ENCODE measurements at regions of chr19 and their contacts with region 1.

Region 1: GRCh38 chr19:3163230-3163886 is 15.2 kb upstream of the S1PR4 start:
- DNase-seq: peak; percentile 58 to 73 (median 73)
- ATAC-seq: peak; percentile 95
- H3K4me3 ChIP-seq: no peak overlapping the region
- H3K4me1 ChIP-seq: peaks cover 3% of the 10 kb centered on the region
- CTCF ChIP-seq: peak; percentile 95

Region 2: DNA sequence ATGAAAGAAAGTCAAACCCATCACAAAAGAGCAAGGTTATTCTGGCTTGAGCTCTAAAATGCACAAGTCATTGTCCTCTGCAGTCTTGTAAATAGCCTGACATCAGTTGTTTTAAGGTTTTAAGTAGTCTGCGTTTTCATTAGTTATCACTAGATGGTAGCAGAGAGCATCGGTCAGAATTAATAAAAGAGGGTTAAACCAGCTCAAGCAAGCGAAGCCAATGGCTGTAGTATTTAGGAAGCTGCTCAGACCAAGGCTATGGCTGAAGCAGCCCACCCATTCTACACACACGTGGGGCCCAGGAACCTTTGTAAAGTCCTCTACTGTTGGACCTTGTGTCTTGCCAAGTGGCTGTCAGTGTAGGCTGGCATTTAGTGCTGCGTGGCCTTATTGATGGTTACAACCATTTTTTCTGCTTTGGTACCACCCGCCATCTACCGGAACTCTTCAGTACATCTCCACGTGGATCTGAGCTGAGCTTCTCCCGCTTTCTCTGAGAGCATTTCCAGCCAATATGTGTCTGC is 275.9 kb before region 1 on chr19:
- intact Hi-C with region 1: loop called in 1 of 2 experiments (anchors 10 kb)
- DNase-seq: peak in 1 of 3 donors; percentile 9
- ATAC-seq: peak; percentile 76
- H3K4me3 ChIP-seq: no peak overlapping the region
- H3K4me1 ChIP-seq: peaks cover 5% of the 10 kb centered on the region
- CTCF ChIP-seq: peak; percentile 35

Region 3: DNA sequence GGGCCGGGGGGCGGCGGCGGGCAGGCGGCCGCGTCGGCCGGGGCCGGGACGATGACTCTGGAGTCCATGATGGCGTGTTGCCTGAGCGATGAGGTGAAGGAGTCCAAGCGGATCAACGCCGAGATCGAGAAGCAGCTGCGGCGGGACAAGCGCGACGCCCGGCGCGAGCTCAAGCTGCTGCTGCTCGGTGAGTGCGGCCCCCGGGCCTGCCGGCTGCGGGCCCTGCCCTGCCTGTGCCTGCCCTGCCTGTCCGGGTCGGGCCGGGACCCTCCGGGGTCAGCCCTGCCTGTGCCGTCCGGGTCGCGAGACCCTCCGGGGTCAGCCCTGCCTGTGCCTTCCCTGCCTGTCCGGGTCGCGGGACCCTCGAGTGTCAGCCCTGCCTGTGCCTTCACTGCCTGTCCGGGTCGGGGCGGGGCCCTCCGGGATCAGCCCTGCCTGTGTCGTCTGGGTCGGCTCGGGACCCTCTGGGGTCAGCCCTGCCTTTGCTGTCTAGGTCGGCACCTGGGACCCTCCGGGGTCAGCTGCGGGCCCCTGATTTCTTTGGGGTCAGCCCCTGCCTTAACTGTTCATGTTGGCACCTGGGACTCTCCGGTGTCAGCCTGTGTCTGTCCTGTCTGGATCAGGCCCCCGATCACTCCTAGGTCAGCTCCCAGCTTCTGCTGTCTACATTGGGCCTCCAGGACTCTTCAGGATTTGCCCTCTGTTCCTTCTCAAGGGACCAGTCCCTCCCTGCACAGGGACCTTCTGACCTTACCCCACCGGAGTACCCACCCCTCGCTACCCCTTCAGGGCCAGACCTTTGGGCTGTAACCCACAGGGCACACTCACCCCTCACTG is 68.5 kb before region 1 on chr19:
- intact Hi-C with region 1: no loop called
- DNase-seq: peak in 1 of 3 donors; percentile 63
- ATAC-seq: no peak
- H3K4me3 ChIP-seq: peak overlapping the region; percentile 93
- H3K4me1 ChIP-seq: peaks cover 43% of the 10 kb centered on the region
- CTCF ChIP-seq: no peak

Region 4: DNA sequence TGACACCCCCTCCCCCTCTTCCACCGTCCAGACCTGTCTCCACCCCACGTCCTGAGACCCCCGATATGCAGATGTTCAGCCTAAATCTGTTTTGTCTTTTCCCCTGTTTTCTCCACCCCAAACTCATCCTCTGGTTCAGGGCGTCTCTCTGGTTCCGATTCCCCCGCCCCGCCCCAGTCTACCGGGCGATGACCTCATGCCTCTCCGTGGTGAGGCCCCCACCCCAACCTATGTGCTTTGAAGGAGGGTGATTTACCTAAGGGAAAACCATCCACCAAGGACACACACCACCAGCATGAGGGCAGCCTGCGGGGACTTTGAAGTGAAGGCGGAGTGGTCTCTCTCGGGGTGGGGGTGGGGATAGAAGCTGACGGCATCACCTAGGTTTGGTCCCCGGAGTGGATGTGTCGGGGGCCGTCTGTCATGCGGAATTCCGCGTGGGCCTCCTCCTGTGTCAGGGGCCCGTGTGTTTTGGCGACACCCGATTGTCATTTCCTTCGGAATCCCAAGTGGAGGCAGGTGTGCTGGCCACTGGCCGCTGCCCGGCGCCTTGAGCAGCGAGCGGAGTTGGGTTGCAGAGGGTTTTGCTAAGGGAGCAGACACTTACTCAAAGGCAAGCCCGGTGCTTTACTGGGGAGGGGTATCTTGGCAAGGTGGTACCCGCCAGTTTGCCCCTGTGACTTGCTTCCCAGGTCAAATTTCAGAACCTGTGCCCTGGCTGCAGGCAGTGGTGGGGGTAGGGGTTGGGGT is 344.2 kb after region 1 on chr19:
- intact Hi-C with region 1: no loop called
- DNase-seq: peak in 2 of 3 donors; percentile 41 to 58
- ATAC-seq: no peak
- H3K4me3 ChIP-seq: no peak overlapping the region
- H3K4me1 ChIP-seq: peaks cover 15% of the 10 kb centered on the region
- CTCF ChIP-seq: no peak

Region 5: GRCh38 chr19:3572132-3572854 is 408.9 kb after region 1 on chr19:
- intact Hi-C with region 1: no loop called
- DNase-seq: peak; percentile 99 to 100 (median 100)
- ATAC-seq: peak; percentile 86
- H3K4me3 ChIP-seq: peak overlapping the region; percentile 91
- H3K4me1 ChIP-seq: peaks cover 35% of the 10 kb centered on the region
- CTCF ChIP-seq: no peak

Measured in mucosa of descending colon (tissue), 3 donors.